ENCODE measurements at regions of chr2 and their contacts with region 1.

Region 1: DNA sequence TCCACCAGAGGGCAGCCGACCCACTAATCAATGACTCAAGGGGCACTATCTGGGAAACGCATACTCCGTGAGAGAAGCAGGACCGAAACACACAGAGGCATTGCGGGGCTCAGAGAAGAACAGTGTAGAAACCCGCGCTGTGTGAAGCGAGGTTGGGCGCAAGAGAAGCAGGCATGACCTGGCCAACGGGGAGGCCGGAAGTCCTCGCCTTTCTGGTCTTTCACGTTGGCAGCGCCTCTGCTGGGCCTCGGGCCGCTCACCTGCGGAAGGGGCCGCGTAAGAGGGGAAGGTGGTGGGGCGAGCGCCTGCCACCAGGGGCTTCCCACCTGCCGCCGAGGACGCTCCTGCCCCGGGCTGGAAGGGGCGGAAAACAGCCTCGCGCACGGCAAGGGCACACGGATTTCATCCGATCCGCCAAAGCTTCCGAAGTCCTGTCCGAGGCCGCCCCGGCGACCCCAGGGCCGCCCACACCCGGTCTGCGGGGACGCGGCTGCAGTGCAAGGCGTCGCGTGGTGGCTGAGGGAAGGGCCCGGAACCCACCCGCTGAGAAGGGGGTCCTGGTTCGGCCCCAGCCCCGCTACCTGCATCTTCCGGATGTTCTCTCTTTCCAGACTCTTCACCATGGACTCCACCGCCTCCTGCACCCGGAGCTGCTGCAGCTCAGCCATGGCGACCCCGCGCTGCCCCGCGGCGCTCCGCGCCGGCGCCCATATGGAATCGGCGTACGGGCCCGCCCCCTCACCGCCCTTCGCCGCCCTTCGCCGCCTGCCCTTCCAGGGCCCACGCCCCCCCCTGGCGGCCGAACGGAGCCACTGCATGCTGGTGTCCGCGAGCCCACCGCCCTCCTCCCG is at the start of gene FAM136A:
- DNase-seq: peak; percentile 75
- H3K4me3 Mint-ChIP-seq: peak within 1 kb of the TSS; percentile 91
- H3K27ac Mint-ChIP-seq: peak within 1 kb of the TSS; percentile 85
- H3K4me1 Mint-ChIP-seq: no peaks in the 10 kb centered on the region
- H3K27me3 Mint-ChIP-seq: no peaks in the 10 kb centered on the region
- CTCF ChIP-seq: peak; percentile 97
- total RNA-seq, gene FAM136A: 38.8 and 43.8 TPM in 2 replicates

Region 2: GRCh38 chr2:69923116-69923515 is 378.5 kb before region 1 on chr2:
- CTCF ChIA-PET with region 1: no interaction called
- POLR2A ChIA-PET with region 1: no interaction called
- intact Hi-C with region 1: no loop called
- DNase-seq: no peak
- H3K4me3 Mint-ChIP-seq: no peak overlapping the region
- H3K27ac Mint-ChIP-seq: no peak overlapping the region
- H3K4me1 Mint-ChIP-seq: peaks cover 13% of the 10 kb centered on the region
- H3K27me3 Mint-ChIP-seq: no peaks in the 10 kb centered on the region
- CTCF ChIP-seq: no peak

Region 3: DNA sequence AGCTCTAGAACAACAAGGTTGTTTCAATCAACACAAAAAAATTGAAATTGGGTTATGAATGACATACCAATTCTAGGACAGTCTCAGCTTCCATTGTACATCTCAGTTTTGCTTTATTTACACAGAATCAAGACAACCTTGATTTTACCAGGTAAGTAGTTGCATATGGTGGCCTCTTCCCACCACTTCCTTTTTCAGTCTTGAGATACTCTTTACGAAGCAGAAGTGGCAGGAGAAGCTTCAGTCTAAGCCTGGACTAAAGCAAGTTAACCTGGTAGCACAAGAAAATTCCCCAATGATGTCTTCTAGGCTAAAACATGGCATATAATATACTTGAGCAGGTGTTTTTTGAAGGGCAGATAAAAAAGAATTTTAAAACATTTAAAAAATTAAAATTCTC is 11.0 kb after region 1 on chr2:
- CTCF ChIA-PET with region 1: interaction called, 42 read pairs
- POLR2A ChIA-PET with region 1: interaction called, 6 read pairs
- intact Hi-C with region 1: no loop called
- DNase-seq: no peak
- H3K4me3 Mint-ChIP-seq: no peak overlapping the region
- H3K27ac Mint-ChIP-seq: no peak overlapping the region
- H3K4me1 Mint-ChIP-seq: no peaks in the 10 kb centered on the region
- H3K27me3 Mint-ChIP-seq: no peaks in the 10 kb centered on the region
- CTCF ChIP-seq: no peak

Region 4: GRCh38 chr2:70340921-70341765 is 39.6 kb after region 1 on chr2:
- CTCF ChIA-PET with region 1: interaction called, 50 read pairs
- POLR2A ChIA-PET with region 1: interaction called, 4 read pairs
- intact Hi-C with region 1: loop called (anchors 1 kb)
- DNase-seq: peak; percentile 82
- H3K4me3 Mint-ChIP-seq: no peak overlapping the region
- H3K27ac Mint-ChIP-seq: no peak overlapping the region
- H3K4me1 Mint-ChIP-seq: peaks cover 17% of the 10 kb centered on the region
- H3K27me3 Mint-ChIP-seq: no peaks in the 10 kb centered on the region
- CTCF ChIP-seq: peak; percentile 81

Region 5: DNA sequence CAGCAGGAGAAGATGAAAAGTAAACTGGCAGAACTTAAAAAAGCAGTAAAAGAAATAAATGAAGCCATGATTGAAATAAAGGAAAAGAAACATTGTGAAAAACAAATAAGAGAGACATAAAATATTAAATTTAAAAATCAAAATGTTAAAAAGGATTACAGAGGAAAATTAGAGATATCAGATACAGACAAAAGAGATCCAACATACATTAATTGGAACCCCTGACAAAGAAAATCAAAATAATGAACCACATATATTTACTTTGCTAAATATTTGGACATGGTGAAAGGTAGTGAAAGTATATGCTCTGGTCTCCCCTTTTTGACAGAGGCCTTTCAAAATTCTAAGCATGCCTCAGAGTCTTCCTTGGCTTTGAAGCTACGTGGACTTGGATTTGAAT is 331.9 kb after region 1 on chr2:
- CTCF ChIA-PET with region 1: interaction called, 27 read pairs
- POLR2A ChIA-PET with region 1: interaction called, 4 read pairs
- intact Hi-C with region 1: no loop called
- DNase-seq: no peak
- H3K4me3 Mint-ChIP-seq: no peak overlapping the region
- H3K27ac Mint-ChIP-seq: no peak overlapping the region
- H3K4me1 Mint-ChIP-seq: no peaks in the 10 kb centered on the region
- H3K27me3 Mint-ChIP-seq: no peaks in the 10 kb centered on the region
- CTCF ChIP-seq: no peak

Region 6: GRCh38 chr2:70647873-70648481 is 346.4 kb after region 1 on chr2:
- CTCF ChIA-PET with region 1: interaction called, 170 read pairs
- POLR2A ChIA-PET with region 1: interaction called, 14 read pairs
- intact Hi-C with region 1: loop called (anchors 1 kb)
- DNase-seq: peak; percentile 67
- H3K4me3 Mint-ChIP-seq: no peak overlapping the region
- H3K27ac Mint-ChIP-seq: no peak overlapping the region
- H3K4me1 Mint-ChIP-seq: no peaks in the 10 kb centered on the region
- H3K27me3 Mint-ChIP-seq: peaks cover 23% of the 10 kb centered on the region
- CTCF ChIP-seq: peak; percentile 96

Region 7: GRCh38 chr2:70861777-70862625 is 560.4 kb after region 1 on chr2:
- CTCF ChIA-PET with region 1: interaction called, 11 read pairs
- POLR2A ChIA-PET with region 1: no interaction called
- intact Hi-C with region 1: no loop called
- DNase-seq: peak; percentile 83
- H3K4me3 Mint-ChIP-seq: no peak overlapping the region
- H3K27ac Mint-ChIP-seq: peak overlapping the region; percentile 17
- H3K4me1 Mint-ChIP-seq: peaks cover 6% of the 10 kb centered on the region
- H3K27me3 Mint-ChIP-seq: peaks cover 80% of the 10 kb centered on the region
- CTCF ChIP-seq: peak; percentile 94